ENCODE measurements at regions of chr10 and their contacts with region 1.

Region 1: GRCh38 chr10:126475941-126476645 is 87.8 kb upstream of the ADAM12 start:
- DNase-seq: no peak
- H3K4me3 ChIP-seq: no peak overlapping the region
- H3K27ac ChIP-seq: no peak overlapping the region
- H3K27me3 ChIP-seq: peaks cover 2% of the 10 kb centered on the region
- CTCF ChIP-seq: no peak

Region 2: DNA sequence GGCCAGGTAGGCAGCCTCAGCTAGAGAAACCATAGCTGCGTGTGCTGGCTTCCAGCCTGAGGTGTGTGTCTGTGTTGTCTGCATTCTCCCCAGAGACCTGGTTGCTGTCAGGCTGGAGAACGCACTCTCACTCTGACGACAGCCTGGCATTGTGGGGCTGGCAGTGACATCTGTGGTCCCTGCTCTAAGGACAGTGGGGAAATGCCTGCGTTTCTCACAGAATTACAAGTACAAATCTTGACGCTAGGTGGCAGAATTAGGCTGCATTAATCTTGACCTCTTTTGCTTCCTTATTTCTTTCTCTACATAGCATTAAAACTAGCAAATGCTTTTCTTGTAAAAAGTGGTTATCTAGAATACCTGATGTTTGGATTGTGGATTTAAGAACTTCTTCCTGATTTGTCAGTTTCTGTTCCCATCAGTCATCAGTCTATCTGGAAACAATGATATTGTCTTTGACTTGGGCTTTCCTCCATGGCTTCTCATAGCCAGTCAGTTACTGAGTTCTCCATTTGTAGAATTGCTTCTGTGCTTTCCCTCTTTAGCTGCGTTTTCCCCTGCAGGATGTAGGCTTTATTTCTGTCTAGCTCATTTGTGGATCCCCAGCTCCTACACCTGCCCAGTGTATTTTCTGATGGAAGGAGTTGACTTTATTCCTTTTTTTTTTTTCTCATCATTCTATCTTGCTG is 493.7 kb before region 1 on chr10:
- CTCF ChIA-PET with region 1: interaction called, 10 read pairs
- POLR2A ChIA-PET with region 1: no interaction called
- DNase-seq: peak; percentile 23
- H3K4me3 ChIP-seq: no peak overlapping the region
- H3K27ac ChIP-seq: no peak overlapping the region
- H3K27me3 ChIP-seq: no peaks in the 10 kb centered on the region
- CTCF ChIP-seq: peak; percentile 58